ENCODE measurements at regions of chr4 and their contacts with region 1.

Region 1: DNA sequence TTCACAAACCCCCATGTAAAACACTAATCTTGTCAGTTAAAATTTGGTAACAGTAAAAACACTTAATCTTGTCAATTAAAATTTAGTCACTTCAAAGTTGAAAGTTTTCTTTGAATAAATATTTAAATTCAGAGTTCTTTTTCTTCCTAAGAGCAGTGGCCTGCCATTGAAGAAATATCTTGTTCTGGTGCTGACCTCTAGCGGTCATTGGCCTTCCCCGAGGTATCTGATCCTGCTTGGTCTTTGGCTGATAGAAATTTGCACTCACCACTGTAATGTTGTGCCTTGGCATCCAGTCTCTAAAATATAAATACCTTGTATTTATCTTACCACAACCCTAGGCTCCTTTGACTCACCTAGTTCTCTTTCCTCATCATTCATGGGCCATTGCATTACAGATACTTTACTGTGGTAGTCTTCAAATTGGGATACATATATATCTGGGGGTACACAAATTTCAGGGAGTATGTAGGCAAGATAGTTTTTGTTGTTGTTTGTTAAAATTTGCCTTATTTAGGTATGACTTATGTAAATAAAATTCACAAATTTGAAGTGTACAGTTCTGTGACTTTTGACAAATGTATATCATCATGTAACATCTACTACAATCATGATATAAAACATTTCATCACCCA is 6.7 kb upstream of the ART3 start:
- DNase-seq: peak; percentile 40 to 44
- H3K4me3 ChIP-seq: no peak overlapping the region
- H3K27ac ChIP-seq: no peak overlapping the region
- H3K4me1 ChIP-seq: no peaks in the 10 kb centered on the region
- H3K27me3 ChIP-seq: no peaks in the 10 kb centered on the region
- CTCF ChIP-seq: peak; percentile 80

Region 2: GRCh38 chr4:75698162-75698962 is 369.4 kb before region 1 on chr4:
- CTCF ChIA-PET with region 1: no interaction called
- POLR2A ChIA-PET with region 1: no interaction called
- intact Hi-C with region 1: no loop called
- DNase-seq: no peak
- H3K4me3 ChIP-seq: no peak overlapping the region
- H3K27ac ChIP-seq: no peak overlapping the region
- H3K4me1 ChIP-seq: no peaks in the 10 kb centered on the region
- H3K27me3 ChIP-seq: no peaks in the 10 kb centered on the region
- CTCF ChIP-seq: no peak

Region 3: GRCh38 chr4:75895744-75896314 is 171.9 kb before region 1 on chr4:
- CTCF ChIA-PET with region 1: no interaction called
- POLR2A ChIA-PET with region 1: no interaction called
- intact Hi-C with region 1: loop called (anchors 5 kb)
- DNase-seq: no peak
- H3K4me3 ChIP-seq: no peak overlapping the region
- H3K27ac ChIP-seq: no peak overlapping the region
- H3K4me1 ChIP-seq: no peaks in the 10 kb centered on the region
- H3K27me3 ChIP-seq: no peaks in the 10 kb centered on the region
- CTCF ChIP-seq: peak; percentile 84

Region 4: DNA sequence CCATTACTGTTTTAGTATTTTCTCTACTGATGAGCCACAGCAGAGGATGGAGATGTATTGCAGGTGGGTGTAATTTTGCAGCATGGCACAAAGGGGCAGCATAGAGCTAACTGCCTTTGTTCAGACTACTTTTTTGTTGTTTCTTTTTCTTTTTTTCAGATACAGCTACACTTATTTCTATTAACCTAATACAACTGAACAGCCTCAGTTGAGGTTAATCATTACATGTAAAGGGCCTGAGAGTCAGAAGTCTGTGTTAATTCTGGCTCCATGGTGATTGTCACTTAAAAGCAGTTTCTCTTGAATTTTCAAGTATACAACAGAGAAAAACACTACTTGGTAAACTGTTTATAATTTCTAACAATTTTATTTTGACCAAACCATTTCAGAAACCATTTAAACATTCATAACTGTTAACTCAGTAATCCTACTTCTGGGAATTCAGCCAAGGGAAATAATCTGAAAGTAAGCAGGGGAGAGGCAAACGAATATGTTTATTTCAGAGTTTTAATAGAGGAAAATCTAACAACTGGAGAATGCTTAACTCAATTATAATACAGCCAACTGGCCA is 151.6 kb before region 1 on chr4:
- CTCF ChIA-PET with region 1: no interaction called
- POLR2A ChIA-PET with region 1: no interaction called
- intact Hi-C with region 1: loop called (anchors 5 kb)
- DNase-seq: peak in 1 of 2 experiments; percentile 13
- H3K4me3 ChIP-seq: no peak overlapping the region
- H3K27ac ChIP-seq: no peak overlapping the region
- H3K4me1 ChIP-seq: no peaks in the 10 kb centered on the region
- H3K27me3 ChIP-seq: no peaks in the 10 kb centered on the region
- CTCF ChIP-seq: peak; percentile 81

Region 5: GRCh38 chr4:75995727-75996126 is 72.0 kb before region 1 on chr4:
- CTCF ChIA-PET with region 1: no interaction called
- POLR2A ChIA-PET with region 1: interaction called, 3 read pairs
- intact Hi-C with region 1: loop called (anchors 1 kb)
- DNase-seq: peak in 1 of 2 experiments; percentile 44
- H3K4me3 ChIP-seq: no peak overlapping the region
- H3K27ac ChIP-seq: no peak overlapping the region
- H3K4me1 ChIP-seq: peaks cover 4% of the 10 kb centered on the region; the same call in 1 of the 2 replicates
- H3K27me3 ChIP-seq: no peaks in the 10 kb centered on the region
- CTCF ChIP-seq: peak; percentile 76